IMR-90 (cell line): ENCODE measurements at regions of chr15 and their contacts with region 1.

Region 1: GRCh38 chr15:79978655-79979514 is 7.9 kb upstream of the BCL2A1 start:
- DNase-seq: peak; percentile 89
- ATAC-seq: peak; percentile 81
- H3K4me3 ChIP-seq: no peak overlapping the region
- H3K27ac ChIP-seq: peak overlapping the region; percentile 39; the same call in 1 of the 2 replicates
- H3K4me1 ChIP-seq: peaks cover 9% of the 10 kb centered on the region
- H3K27me3 ChIP-seq: no peaks in the 10 kb centered on the region
- CTCF ChIP-seq: no peak
- POLR2A ChIP-seq: no peak
- RAD21 ChIP-seq: no peak

Region 2: GRCh38 chr15:79640206-79640605 is 338.7 kb before region 1 on chr15:
- CTCF ChIA-PET with region 1: no interaction called
- POLR2A ChIA-PET with region 1: no interaction called
- dilution Hi-C with region 1: no loop called
- in situ Hi-C with region 1: loop called (anchors 25 kb)
- intact Hi-C with region 1: no loop called
- DNase-seq: peak; percentile 84
- ATAC-seq: peak; percentile 96
- H3K4me3 ChIP-seq: no peak overlapping the region
- H3K27ac ChIP-seq: peak overlapping the region; percentile 12
- H3K4me1 ChIP-seq: peaks cover 6% of the 10 kb centered on the region
- H3K27me3 ChIP-seq: no peaks in the 10 kb centered on the region
- CTCF ChIP-seq: no peak
- POLR2A ChIP-seq: no peak
- RAD21 ChIP-seq: no peak

Region 3: DNA sequence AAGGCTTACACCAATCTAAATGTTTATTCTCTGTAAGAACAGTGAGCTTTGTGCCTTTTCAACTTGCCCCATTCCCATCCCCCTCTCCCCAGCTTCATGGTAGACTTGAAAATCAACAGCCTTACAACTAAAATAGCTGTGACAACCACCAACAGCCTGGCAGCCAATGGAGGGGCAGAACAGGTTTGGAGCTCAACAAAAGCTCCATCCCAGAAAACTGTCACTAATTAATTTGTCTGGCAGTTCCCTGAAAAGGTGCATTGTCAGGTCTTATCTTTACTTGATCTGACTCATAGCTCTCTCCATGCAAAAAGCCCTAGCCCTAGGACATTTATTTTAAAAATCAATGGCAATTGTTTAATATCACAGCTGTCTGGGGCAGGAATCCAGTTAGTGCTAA is 104.6 kb before region 1 on chr15:
- CTCF ChIA-PET with region 1: no interaction called
- POLR2A ChIA-PET with region 1: no interaction called
- dilution Hi-C with region 1: no loop called
- in situ Hi-C with region 1: no loop called
- intact Hi-C with region 1: no loop called
- DNase-seq: no peak
- ATAC-seq: no peak
- H3K4me3 ChIP-seq: no peak overlapping the region
- H3K27ac ChIP-seq: no peak overlapping the region
- H3K4me1 ChIP-seq: no peaks in the 10 kb centered on the region
- H3K27me3 ChIP-seq: no peaks in the 10 kb centered on the region
- CTCF ChIP-seq: no peak
- POLR2A ChIP-seq: no peak
- RAD21 ChIP-seq: no peak

Region 4: DNA sequence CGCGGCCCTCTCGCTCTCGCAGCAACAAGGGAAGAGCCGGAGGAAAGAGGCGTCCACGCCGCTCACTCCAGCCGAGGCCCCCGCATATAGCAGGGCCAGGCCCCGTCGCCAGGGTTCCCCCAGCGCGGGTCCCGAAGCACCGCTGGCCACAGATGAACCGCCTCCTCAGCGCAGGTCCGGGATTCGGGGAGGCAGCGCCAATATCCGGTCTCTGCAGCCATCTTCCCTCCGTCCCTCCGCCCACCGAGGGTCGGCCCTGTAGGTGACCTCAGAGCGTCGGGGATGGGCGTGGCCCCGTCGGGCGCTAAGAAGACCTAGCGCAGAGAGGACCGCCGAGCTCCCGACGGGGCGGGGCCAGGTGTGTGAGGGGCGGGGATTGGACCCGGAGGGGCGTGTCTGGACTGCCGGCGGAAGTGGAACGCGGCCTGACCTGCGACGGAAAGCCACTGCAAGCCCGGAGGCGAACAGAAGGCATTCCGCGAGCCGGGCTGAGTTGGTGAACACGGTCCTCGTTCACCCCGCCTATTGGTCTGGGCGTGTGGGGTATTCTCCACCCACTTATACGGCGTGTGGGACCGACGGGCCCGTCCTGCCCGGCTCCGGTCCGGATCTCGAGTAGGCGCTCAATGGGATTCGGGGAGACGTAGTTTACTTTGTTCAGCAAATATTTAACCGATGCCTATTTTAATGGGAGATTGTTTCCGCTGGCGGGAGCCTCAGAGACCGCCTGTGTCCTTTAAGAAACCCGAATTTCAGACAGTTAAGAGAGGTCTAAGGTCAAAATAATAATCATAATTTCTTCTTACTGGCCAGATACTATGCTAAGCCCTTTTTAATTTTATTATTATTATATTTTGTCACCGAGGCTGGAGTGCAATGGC is 55.1 kb before region 1 on chr15:
- CTCF ChIA-PET with region 1: no interaction called
- POLR2A ChIA-PET with region 1: interaction called, 7 read pairs
- dilution Hi-C with region 1: no loop called
- in situ Hi-C with region 1: no loop called
- intact Hi-C with region 1: loop called (anchors 5 kb)
- DNase-seq: peak; percentile 93
- ATAC-seq: peak; percentile 97
- H3K4me3 ChIP-seq: peak overlapping the region; percentile 89
- H3K27ac ChIP-seq: peak overlapping the region; percentile 89
- H3K4me1 ChIP-seq: no peaks in the 10 kb centered on the region
- H3K27me3 ChIP-seq: no peaks in the 10 kb centered on the region
- CTCF ChIP-seq: no peak
- POLR2A ChIP-seq: peak; percentile 85
- RAD21 ChIP-seq: no peak; the same call in 1 of the 2 replicates